Activated naive CD4-positive, alpha-beta T cell treated with anti-CD3 and anti-CD28 coated beads for 36 hours (primary cell): ENCODE measurements at regions of chr1 and their contacts with region 1.

Region 1: DNA sequence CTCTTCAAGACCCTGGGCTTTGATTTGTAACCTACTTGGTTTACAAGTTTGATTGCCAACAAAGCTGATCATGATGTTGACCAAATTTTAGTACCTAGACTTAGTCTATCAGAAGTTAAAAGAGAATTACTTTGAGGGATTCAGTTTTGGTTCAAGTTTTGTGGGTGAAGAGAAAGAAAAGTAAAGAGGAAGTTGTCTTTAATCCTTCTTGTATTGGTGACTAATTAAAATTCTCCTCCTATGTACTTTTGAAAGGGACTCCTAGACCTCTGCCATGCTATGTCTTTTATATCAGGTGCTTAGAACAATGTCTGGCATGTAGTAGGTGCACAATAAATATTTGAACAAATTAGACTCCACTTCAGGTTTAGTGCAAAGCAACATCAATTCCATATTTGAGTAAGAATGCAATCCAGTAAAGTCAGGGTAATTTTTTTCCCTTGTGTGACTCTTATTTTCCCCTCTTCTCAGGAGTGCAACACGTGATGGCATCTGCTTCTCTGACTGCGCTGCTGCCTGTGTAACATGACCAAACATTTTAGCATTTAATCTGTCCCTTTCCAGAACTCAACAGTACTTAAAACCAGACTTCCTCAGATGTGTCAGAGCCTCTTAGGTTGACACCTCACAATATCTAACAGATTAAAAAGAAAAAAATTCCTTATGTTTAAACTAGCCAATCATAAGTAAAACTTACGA is 41.1 kb upstream of the KCNQ4 start:
- DNase-seq: peak; percentile 55
- H3K4me3 Mint-ChIP-seq: no peak overlapping the region
- H3K27ac Mint-ChIP-seq: peak overlapping the region; percentile 66
- H3K4me1 Mint-ChIP-seq: peaks cover 60% of the 10 kb centered on the region
- H3K27me3 Mint-ChIP-seq: no peaks in the 10 kb centered on the region

Region 2: DNA sequence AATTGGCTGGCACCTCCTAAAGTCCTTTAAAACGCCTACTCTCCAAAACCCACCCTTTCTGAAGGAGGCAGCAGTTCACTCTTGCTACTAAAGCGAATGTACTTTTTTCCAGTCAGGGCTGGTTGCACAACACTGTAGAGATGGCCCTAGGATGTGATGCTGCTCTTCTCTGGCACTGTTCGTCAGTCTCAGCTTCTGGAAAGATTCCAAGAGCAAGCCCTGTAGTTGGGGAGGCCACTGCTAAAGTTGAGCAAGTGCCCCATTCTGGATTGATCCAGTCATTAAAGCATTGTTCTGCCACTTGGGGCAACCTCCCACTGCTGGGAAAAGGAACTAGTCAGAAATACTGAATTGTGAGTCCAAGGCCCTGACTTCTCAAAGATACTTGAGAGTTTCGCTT is 12.6 kb after region 1 on chr1:
- CTCF ChIA-PET with region 1: interaction called, 9 read pairs
- intact Hi-C with region 1: loop called (anchors 1 kb)
- DNase-seq: no peak
- H3K4me3 Mint-ChIP-seq: no peak overlapping the region
- H3K27ac Mint-ChIP-seq: no peak overlapping the region
- H3K4me1 Mint-ChIP-seq: peaks cover 23% of the 10 kb centered on the region
- H3K27me3 Mint-ChIP-seq: no peaks in the 10 kb centered on the region

Region 3: GRCh38 chr1:40849801-40850592 is 107.5 kb after region 1 on chr1:
- CTCF ChIA-PET with region 1: no interaction called
- intact Hi-C with region 1: no loop called
- DNase-seq: peak; percentile 87
- H3K4me3 Mint-ChIP-seq: no peak overlapping the region
- H3K27ac Mint-ChIP-seq: no peak overlapping the region
- H3K4me1 Mint-ChIP-seq: peaks cover 8% of the 10 kb centered on the region
- H3K27me3 Mint-ChIP-seq: no peaks in the 10 kb centered on the region